PC-9 (cell line): ENCODE measurements at regions of chr6 and their contacts with region 1.

Region 1: DNA sequence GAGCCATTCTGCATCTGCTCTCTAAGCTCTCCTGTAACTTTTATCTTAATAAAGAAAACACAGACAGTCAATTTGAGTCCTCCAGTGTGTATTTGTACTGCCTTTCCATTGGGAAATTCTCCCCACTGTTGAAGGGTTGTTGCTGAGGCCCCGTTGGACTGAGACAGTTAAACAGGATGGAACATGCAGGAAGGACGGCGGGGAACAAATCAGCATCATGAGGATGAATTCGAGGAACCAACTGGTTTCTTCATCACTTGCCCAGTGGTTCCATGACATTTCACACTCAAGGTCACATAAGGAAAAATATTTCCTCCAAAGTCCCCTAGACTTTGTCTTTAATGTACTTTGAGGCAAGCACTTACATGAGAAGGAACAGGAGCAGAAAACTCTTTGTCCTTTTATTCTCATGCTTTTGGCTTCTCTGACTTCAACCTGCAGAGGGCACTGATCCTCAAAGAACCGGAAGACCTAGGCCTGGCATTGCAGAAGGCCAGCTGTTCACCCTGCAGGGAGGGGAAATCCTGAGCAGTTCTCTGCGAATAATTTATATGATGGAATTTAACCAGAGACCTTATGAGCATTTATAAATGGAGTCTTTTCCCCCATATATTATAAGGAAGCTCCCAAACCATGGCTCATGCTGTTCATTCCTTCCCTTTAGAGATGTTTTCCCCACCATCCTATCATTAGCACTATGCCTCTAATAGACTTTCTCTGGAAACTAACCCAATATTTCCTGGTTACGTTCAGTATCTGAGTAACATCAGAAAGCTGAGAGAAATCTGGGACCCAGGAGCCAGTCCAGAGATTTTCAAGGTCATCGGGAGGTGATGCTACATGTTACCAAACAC is 55.2 kb upstream of the ADGRF1 start:
- DNase-seq: peak; percentile 74 to 81
- H3K4me3 ChIP-seq: no peak overlapping the region
- H3K27ac ChIP-seq: peak overlapping the region; percentile 95
- H3K4me1 ChIP-seq: peaks cover 65% of the 10 kb centered on the region
- H3K27me3 ChIP-seq: no peaks in the 10 kb centered on the region
- CTCF ChIP-seq: peak; percentile 88

Region 2: DNA sequence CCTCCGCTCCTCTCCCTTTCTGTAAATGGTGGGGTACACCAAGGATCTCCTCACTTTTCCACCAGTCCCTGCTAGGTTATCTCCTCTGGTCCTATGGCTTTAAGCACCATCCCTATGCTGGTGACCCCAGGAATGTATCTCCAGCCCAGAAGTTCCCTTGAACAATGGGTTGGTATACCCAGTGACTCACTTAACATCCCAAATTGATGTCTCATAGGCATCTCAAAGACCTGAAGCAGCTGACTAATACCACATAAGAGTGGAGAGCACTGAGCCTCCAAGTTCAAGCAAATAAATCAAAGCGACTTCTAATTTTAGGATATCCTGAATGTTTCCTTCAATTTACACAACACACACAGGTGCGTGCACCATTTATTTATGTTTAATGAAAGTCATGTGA is 103.5 kb before region 1 on chr6:
- CTCF ChIA-PET with region 1: no interaction called
- POLR2A ChIA-PET with region 1: no interaction called
- intact Hi-C with region 1: loop called (anchors 5 kb)
- DNase-seq: peak; percentile 62 to 98
- H3K4me3 ChIP-seq: no peak overlapping the region
- H3K27ac ChIP-seq: peak overlapping the region; percentile 70
- H3K4me1 ChIP-seq: peaks cover 57% of the 10 kb centered on the region
- H3K27me3 ChIP-seq: no peaks in the 10 kb centered on the region
- CTCF ChIP-seq: no peak

Region 3: GRCh38 chr6:47111685-47112084 is 14.4 kb after region 1 on chr6:
- CTCF ChIA-PET with region 1: interaction called, 3 read pairs
- POLR2A ChIA-PET with region 1: interaction called, 6 read pairs
- intact Hi-C with region 1: loop called (anchors 1 kb)
- DNase-seq: peak; percentile 71 to 96
- H3K4me3 ChIP-seq: no peak overlapping the region
- H3K27ac ChIP-seq: peak overlapping the region; percentile 98
- H3K4me1 ChIP-seq: peaks cover 95% of the 10 kb centered on the region
- H3K27me3 ChIP-seq: no peaks in the 10 kb centered on the region
- CTCF ChIP-seq: no peak

Region 4: GRCh38 chr6:47153032-47153755 is 55.9 kb after region 1 on chr6:
- CTCF ChIA-PET with region 1: no interaction called
- POLR2A ChIA-PET with region 1: no interaction called
- intact Hi-C with region 1: loop called (anchors 1 kb)
- DNase-seq: peak; percentile 65 to 99
- H3K4me3 ChIP-seq: no peak overlapping the region
- H3K27ac ChIP-seq: peak overlapping the region; percentile 97
- H3K4me1 ChIP-seq: peaks cover 60% of the 10 kb centered on the region
- H3K27me3 ChIP-seq: no peaks in the 10 kb centered on the region
- CTCF ChIP-seq: no peak

Region 5: DNA sequence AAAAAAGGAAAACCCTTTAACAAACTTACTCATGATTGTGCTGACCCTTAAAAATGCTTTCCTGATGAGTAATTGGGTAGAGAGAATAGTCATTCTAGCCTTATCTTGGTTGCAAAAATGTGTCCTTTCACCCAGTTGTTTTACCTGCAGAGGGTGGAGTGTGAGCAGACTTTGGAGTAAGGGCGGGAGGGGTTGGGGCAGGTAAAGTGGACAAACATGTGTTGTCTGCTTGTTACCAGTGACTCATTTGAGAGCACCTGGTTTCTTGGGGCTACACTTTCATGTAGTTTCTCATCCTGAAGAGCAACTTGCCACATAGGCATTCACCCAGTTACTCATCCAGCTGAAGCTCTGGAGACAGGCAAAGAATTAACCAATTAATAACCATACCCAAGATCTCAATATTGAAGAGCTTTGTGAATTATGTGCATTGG is 91.3 kb after region 1 on chr6:
- CTCF ChIA-PET with region 1: no interaction called
- POLR2A ChIA-PET with region 1: no interaction called
- intact Hi-C with region 1: loop called (anchors 1 kb)
- DNase-seq: peak; percentile 71 to 99
- H3K4me3 ChIP-seq: 0 out of 2 replicates have a peak overlapping the region, but pooled peaks have one; percentile 2
- H3K27ac ChIP-seq: peak overlapping the region; percentile 93
- H3K4me1 ChIP-seq: peaks cover 56% of the 10 kb centered on the region
- H3K27me3 ChIP-seq: no peaks in the 10 kb centered on the region
- CTCF ChIP-seq: no peak

Region 6: GRCh38 chr6:47309291-47310130 is 212.2 kb after region 1 on chr6 and contains the start of gene TNFRSF21:
- CTCF ChIA-PET with region 1: interaction called, 6 read pairs
- POLR2A ChIA-PET with region 1: interaction called, 5 read pairs
- intact Hi-C with region 1: loop called (anchors 1 kb)
- DNase-seq: peak; percentile 85 to 95
- H3K4me3 ChIP-seq: peak within 1 kb of the TSS; percentile 91
- H3K27ac ChIP-seq: peak within 1 kb of the TSS; percentile 90
- H3K4me1 ChIP-seq: peaks cover 32% of the 10 kb centered on the region
- H3K27me3 ChIP-seq: no peaks in the 10 kb centered on the region
- CTCF ChIP-seq: peak; percentile 87
- total RNA-seq, gene TNFRSF21: 172 and 219 TPM in 2 replicates